ENCODE measurements at regions of chr11 and their contacts with region 1.

Region 1: GRCh38 chr11:2885676-2886081 is at the start of gene CDKN1C:
- DNase-seq: peak; percentile 63
- H3K4me3 Mint-ChIP-seq: peak within 1 kb of the TSS; percentile 83
- H3K27ac Mint-ChIP-seq: peak within 1 kb of the TSS; percentile 31
- H3K4me1 Mint-ChIP-seq: no peaks in the 10 kb centered on the region
- H3K27me3 Mint-ChIP-seq: no peaks in the 10 kb centered on the region
- CTCF ChIP-seq: no peak
- total RNA-seq, gene CDKN1C: 5.7 and 6.9 TPM in 2 replicates

Region 2: DNA sequence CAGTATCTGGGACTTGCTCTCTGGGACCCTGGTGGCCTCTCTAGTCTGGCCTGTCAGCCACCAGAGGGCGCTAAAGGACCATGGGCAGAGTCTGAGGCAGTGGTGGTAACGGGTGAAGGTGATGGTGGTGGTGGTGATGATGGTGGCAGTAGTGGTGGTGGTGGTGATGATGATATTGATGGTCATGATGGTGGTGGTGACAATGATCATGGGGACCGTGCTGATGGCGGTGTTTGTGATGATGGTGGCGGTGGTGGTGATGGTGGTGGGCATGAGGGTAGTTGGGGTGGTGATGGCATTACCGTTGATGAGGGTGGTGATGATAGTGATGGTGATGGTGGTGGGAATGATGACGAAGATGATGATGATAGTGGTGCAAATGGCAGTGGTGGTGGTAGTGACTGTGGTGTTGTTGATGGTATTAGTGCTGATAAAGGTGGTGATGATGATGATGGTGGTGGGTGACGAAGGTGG is 457.3 kb before region 1 on chr11:
- CTCF ChIA-PET with region 1: interaction called, 3 read pairs
- POLR2A ChIA-PET with region 1: no interaction called
- intact Hi-C with region 1: loop called (anchors 1 kb)
- DNase-seq: peak; percentile 68
- H3K4me3 Mint-ChIP-seq: no peak overlapping the region
- H3K27ac Mint-ChIP-seq: no peak overlapping the region
- H3K4me1 Mint-ChIP-seq: no peaks in the 10 kb centered on the region
- H3K27me3 Mint-ChIP-seq: no peaks in the 10 kb centered on the region
- CTCF ChIP-seq: peak; percentile 88

Region 3: GRCh38 chr11:2555336-2556290 is 330.1 kb before region 1 on chr11:
- CTCF ChIA-PET with region 1: interaction called, 16 read pairs
- POLR2A ChIA-PET with region 1: no interaction called
- intact Hi-C with region 1: no loop called
- DNase-seq: no peak
- H3K4me3 Mint-ChIP-seq: no peak overlapping the region
- H3K27ac Mint-ChIP-seq: no peak overlapping the region
- H3K4me1 Mint-ChIP-seq: peaks cover 5% of the 10 kb centered on the region
- H3K27me3 Mint-ChIP-seq: peaks cover 22% of the 10 kb centered on the region
- CTCF ChIP-seq: no peak

Region 4: DNA sequence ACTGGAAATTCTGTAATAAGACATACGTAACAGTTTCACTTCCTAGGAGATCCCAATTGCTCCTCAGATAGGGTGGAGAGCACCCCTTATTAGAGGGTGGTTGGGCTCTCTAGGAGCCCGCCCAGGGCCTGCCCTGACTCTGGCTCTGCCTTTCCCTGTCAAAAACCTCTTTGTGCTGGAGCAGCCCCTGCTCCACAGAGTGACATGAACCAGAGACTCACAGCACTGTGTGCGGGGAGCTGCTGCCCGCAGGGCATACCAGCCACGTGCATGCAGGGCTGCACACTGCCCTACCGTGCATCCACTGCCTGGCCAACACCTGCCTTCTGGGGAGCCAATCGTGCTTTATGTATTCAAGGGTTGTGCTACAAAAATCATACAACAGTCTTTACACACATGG is 210.1 kb before region 1 on chr11:
- CTCF ChIA-PET with region 1: no interaction called
- POLR2A ChIA-PET with region 1: no interaction called
- intact Hi-C with region 1: no loop called
- DNase-seq: no peak
- H3K4me3 Mint-ChIP-seq: no peak overlapping the region
- H3K27ac Mint-ChIP-seq: no peak overlapping the region
- H3K4me1 Mint-ChIP-seq: no peaks in the 10 kb centered on the region
- H3K27me3 Mint-ChIP-seq: no peaks in the 10 kb centered on the region
- CTCF ChIP-seq: no peak

Region 5: DNA sequence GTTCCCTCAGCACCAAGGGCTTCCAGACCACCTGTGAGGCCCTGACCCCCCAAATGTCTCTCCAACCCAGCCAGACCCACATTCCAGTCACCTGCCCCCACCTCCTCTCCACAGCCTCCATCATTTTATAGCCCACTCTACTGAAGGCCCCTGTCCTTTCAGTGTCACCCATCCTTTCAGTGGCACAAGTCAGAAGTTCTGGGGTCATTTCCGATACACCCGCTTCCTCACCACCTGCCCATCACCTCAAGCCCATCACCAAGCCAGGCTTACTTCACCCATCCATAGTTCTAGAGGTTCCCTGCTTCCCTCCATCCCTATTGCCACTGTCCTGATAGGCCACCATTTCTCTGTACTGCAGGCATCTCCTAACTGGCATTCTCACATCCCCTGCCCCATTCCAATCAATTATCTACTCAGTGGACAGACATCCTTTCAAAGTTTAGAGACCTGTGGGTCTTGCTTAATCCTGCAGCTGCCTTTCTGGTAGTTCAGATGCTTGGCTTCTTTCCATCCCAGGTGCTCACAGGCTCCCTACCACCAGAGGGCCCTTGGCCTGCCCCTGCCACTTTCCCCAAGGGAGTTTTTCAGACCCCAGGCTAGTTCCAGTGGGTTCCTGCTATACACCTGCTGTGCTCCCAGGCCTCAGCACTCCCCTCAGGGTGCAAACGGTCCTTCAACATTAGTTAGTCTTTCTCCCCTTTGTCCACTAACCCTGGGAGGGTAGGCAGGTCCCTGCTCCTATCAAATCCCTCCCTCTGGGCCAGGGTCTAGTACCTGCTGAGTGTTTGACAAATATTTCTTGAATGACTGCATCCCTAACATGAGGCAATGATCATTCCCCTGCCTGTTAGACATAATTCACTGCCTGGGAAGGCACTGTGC is 193.4 kb before region 1 on chr11:
- CTCF ChIA-PET with region 1: interaction called, 6 read pairs
- POLR2A ChIA-PET with region 1: interaction called, 4 read pairs
- intact Hi-C with region 1: loop called (anchors 2 kb)
- DNase-seq: peak; percentile 49
- H3K4me3 Mint-ChIP-seq: no peak overlapping the region
- H3K27ac Mint-ChIP-seq: peak overlapping the region; percentile 68
- H3K4me1 Mint-ChIP-seq: peaks cover 16% of the 10 kb centered on the region
- H3K27me3 Mint-ChIP-seq: no peaks in the 10 kb centered on the region
- CTCF ChIP-seq: peak; percentile 33

Region 6: GRCh38 chr11:2778630-2779498 is 106.8 kb before region 1 on chr11:
- CTCF ChIA-PET with region 1: interaction called, 6 read pairs
- POLR2A ChIA-PET with region 1: interaction called, 6 read pairs
- intact Hi-C with region 1: loop called (anchors 2 kb)
- DNase-seq: peak; percentile 97
- H3K4me3 Mint-ChIP-seq: peak overlapping the region; percentile 58
- H3K27ac Mint-ChIP-seq: peak overlapping the region; percentile 97
- H3K4me1 Mint-ChIP-seq: peaks cover 15% of the 10 kb centered on the region
- H3K27me3 Mint-ChIP-seq: peaks cover 4% of the 10 kb centered on the region
- CTCF ChIP-seq: peak; percentile 42

Region 7: DNA sequence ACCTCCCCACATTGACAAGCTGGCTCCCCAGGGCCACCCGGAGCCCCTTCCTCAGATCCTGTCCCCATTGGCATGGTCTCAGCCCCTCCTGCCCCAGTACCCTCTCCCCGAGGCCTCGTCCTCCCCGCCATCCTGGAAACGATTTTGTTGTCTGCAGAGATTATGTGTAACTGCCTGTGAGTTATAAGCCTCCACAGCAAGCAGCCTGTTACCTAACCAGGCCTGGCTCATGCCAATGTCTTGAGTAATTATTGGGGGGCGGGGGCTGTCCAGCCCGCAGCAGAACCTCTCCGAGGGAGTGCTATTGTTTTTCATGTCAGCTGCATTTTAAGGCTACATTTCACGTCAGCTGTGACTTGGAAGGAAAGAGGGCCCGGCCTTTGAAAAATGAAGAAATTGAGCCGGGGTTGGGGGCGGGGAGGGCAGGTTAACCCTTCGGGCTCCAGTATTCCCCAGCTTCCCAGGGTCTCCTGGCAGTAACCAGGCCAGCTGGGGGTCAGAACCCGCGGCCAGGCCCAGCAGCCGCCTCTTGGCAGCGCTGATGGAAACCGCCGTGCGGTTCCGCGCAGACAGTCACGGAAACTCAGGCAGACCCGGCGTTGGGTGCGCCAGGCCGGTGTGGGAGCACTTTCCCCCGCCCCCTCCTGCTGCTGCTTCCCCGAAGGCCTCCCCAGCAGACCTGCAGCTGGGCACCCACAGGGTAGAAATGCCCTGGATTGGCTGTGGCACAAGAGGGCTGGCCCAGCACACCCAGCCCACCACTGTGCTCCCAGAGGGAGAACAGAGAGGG is 59.6 kb before region 1 on chr11:
- CTCF ChIA-PET with region 1: interaction called, 16 read pairs
- POLR2A ChIA-PET with region 1: interaction called, 5 read pairs
- intact Hi-C with region 1: no loop called
- DNase-seq: peak; percentile 94
- H3K4me3 Mint-ChIP-seq: peak overlapping the region; percentile 65
- H3K27ac Mint-ChIP-seq: peak overlapping the region; percentile 97
- H3K4me1 Mint-ChIP-seq: peaks cover 37% of the 10 kb centered on the region
- H3K27me3 Mint-ChIP-seq: no peaks in the 10 kb centered on the region
- CTCF ChIP-seq: no peak

Region 8: DNA sequence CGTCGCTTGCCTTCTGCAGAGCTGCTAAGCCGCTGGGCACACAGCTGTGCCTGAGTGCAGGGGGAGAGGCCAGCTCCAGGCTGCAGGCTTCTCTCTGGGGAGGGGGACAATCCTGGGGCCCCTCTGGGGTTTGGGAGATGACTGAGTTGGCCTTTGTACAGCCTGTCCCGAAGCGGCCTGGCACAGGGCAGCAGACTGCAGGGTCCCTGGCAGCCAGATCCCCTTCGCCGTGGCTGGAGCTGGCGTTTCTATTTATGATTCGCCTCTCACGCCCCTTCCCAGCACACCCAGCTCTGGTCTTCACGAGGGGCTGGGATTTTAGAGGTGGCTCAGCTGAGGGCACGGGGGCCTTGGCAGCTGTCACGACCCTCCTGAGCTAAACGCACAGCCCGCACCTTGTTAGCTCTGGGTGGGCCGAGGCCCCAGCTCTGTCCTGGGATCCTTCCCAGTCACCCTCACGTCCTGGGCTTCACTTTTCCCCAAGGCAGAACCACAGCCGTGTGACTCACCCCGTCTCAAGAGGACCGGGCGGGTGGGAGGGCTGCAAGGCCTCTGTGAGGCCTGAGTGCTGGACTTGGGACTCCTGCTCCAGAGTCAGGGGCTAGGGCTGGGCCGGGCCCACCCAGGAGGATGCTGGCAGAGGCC is 261.1 kb after region 1 on chr11:
- CTCF ChIA-PET with region 1: no interaction called
- POLR2A ChIA-PET with region 1: no interaction called
- intact Hi-C with region 1: no loop called
- DNase-seq: no peak
- H3K4me3 Mint-ChIP-seq: no peak overlapping the region
- H3K27ac Mint-ChIP-seq: no peak overlapping the region
- H3K4me1 Mint-ChIP-seq: peaks cover 4% of the 10 kb centered on the region
- H3K27me3 Mint-ChIP-seq: no peaks in the 10 kb centered on the region
- CTCF ChIP-seq: no peak